Mucosa of descending colon (tissue), 3 donors: ENCODE measurements at regions of chr9 and their contacts with region 1.

Region 1: DNA sequence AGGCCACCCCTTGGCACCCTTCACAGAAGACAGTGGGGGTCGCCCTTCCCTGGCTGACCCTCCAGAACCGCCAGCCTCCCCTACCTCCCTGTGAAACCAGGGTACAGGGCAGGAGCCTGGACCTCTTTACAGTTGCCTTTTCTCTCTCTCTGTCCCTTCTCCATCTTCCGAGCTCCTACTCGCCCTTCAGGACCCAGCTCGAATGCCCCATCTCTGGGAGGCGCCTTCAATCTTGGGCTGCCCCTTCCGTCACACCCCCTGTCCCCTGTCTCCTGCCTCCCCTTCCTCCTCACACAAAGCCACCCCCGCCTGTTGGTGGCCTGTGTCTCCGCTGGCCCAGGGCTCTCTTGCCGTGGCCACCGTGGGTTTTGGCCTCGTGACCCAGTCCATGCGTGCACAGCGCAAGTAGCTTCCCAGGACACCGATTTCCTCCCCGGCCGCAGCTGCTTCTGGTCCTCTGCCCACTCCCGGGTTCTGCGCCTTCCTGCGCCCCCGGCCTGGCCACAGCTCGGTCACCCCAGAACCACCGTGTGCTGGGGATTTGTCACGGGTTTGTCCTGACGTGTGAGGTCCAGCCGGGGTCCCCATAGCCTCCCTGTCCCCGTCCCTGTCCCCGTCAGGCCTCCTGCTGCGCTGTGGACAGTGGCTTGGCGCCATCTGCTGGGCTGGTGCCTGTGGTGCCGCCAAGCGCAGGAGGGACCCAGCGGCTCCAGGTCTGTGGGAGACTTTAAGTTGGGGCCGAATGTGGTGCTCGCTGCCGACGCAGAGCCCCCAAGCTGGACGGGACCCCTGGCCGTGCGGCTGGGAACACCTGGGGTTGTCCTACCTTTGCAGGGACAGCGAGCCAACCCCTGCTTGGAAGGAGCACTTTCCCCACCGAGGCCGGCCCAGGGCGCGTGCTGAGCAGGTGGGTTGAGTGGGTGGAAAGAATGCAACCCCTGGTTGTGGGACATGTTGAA is 4.0 kb upstream of the TMEM250 start:
- DNase-seq: peak; percentile 76 to 86 (median 85)
- ATAC-seq: peak; percentile 31
- H3K4me3 ChIP-seq: no peak overlapping the region
- H3K4me1 ChIP-seq: peaks cover 20% of the 10 kb centered on the region
- CTCF ChIP-seq: peak; percentile 86

Region 2: DNA sequence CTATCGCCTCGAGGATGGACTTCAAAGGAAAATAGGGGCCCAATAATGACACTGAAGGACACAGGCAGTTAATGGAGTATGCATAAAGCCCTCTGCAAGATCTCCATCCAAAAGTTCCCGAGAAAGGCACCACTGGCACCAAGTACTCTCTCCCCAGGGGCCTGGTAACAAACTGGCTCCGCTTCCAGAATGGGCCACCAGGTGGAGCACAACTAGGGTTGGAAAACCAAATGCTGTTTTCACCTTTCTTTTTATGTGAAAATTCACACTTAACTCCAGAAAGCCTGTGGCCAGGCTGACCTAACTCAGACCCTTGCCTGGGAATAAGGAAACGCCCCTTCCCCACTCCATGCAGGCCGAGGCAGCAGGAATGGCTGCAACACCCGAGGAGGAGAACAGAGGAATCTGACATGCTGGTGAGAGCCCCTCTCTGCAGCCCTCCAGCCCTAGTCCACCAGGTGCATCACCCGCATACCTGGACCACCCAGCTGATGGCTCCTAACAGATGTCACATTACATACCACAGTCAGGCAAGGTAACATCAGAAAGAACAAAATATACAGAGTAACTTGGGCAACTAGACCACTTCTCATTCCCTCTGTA is 258.2 kb before region 1 on chr9:
- intact Hi-C with region 1: loop called in 1 of 2 experiments (anchors 10 kb)
- DNase-seq: peak in 2 of 3 donors; percentile 74 to 82
- ATAC-seq: peak; percentile 60
- H3K4me3 ChIP-seq: no peak overlapping the region
- H3K4me1 ChIP-seq: no peaks in the 10 kb centered on the region
- CTCF ChIP-seq: peak; percentile 81

Region 3: DNA sequence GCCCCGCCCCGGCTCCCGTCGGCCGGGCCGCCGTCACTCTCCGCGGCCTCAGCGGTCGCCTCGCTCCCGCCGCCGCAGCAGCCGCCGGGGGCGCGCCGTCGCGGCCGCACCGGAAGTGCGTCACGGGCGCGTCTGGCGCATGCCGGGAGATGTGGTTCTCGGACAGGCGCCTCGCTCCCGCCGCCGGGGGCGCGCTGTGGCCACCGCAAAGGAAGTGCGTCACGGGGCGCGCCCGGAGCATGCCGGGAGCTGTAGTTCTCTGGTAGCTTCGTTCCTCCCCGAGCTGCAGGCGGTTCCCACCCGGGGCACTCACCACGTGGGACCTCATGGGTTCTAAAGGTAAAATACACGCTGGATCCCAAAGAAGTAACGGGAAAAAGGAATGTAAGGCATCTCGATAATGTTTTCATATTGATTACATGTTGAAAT is 161.4 kb before region 1 on chr9 and contains the start of gene UBAC1:
- intact Hi-C with region 1: loop called in 1 of 2 experiments (anchors 2 kb)
- DNase-seq: peak; percentile 97
- ATAC-seq: peak; percentile 97
- H3K4me3 ChIP-seq: peak within 1 kb of the TSS; percentile 79
- H3K4me1 ChIP-seq: peaks cover 6% of the 10 kb centered on the region
- CTCF ChIP-seq: no peak
- total RNA-seq, gene UBAC1: 55.5 to 70.4 (median 64.0) TPM

Region 4: DNA sequence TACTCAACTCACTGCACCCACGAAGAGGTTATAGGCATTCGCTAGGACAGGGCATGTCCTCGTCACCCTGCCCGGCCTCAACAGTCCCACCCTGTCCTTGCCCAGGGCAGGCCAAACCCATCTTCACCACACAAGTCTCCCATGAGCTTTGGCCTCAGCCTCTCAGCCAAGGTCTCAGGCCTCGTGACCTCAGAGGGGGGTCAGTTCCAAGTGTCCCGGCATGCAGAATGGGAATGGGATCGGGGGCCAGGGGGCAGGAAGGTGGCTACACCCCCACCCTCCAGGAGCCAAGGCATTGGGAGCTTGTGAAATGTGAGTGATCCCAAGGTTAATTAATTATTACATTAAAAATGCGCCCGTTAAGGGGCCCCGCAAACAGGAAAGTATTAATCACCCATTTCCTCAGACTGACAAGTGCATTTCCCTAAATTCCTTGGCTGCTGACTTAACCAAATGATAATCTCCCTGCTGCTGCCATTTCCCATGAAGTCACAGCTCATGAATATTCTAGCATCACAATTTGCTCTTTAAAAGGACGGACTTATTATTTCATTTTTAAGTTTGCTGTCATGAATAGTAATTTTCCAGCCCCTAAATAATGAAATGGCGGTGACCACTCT is 153.5 kb before region 1 on chr9:
- intact Hi-C with region 1: loop called (anchors 2 kb)
- DNase-seq: no peak
- ATAC-seq: no peak
- H3K4me3 ChIP-seq: no peak overlapping the region
- H3K4me1 ChIP-seq: no peaks in the 10 kb centered on the region
- CTCF ChIP-seq: no peak

Region 5: DNA sequence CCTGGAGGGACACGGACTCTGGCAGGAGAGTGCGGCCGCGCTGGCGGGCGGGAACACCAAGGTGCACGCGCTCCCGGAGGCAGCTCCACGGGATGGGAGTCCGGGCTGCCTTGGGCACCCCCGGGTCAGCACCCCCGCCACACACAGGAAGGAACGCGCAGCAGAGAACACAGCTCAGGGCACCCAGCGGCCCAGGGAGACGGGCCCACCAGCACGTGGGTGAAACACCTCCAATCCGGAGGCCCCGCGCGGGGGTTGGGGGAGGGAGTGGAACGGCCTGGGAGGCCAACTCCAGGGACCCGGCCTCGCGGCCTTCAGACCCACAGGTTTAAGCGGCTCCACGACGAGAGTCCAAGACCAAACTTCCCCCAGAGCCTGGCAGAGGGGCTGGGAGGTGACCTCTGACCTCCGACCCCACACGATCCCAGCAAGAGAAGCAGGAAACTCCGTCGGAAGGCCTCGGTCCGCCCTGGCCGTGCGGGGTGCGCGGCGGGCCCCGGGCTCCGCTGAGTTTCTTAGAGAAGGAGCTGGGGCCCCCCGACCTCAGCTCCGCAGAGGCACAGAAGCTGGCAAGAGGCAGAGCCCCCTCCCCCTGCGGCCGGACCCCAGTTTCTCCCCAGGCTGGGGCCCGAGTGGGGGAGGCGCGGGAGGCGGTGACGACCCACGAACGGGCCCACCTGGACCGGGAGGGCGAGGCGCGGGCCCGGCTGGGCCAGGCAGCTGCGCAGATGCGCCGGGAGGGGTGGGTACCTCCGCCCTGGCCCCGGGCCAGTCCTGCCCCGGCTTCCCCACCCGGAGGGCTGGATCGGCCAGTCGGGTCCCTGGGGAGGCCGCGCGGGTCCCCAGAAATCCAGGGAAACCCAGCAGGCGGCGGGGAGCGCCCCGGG is 28.5 kb before region 1 on chr9:
- intact Hi-C with region 1: no loop called
- DNase-seq: peak; percentile 66 to 83 (median 77)
- ATAC-seq: peak; percentile 52
- H3K4me3 ChIP-seq: peak overlapping the region; percentile 72
- H3K4me1 ChIP-seq: peaks cover 16% of the 10 kb centered on the region
- CTCF ChIP-seq: no peak

Region 6: GRCh38 chr9:136255896-136256890 is 133.5 kb after region 1 on chr9:
- intact Hi-C with region 1: no loop called
- DNase-seq: no peak
- ATAC-seq: peak; percentile 34
- H3K4me3 ChIP-seq: no peak overlapping the region
- H3K4me1 ChIP-seq: no peaks in the 10 kb centered on the region
- CTCF ChIP-seq: no peak